ENCODE measurements at regions of chr5 and their contacts with region 1.

Region 1: DNA sequence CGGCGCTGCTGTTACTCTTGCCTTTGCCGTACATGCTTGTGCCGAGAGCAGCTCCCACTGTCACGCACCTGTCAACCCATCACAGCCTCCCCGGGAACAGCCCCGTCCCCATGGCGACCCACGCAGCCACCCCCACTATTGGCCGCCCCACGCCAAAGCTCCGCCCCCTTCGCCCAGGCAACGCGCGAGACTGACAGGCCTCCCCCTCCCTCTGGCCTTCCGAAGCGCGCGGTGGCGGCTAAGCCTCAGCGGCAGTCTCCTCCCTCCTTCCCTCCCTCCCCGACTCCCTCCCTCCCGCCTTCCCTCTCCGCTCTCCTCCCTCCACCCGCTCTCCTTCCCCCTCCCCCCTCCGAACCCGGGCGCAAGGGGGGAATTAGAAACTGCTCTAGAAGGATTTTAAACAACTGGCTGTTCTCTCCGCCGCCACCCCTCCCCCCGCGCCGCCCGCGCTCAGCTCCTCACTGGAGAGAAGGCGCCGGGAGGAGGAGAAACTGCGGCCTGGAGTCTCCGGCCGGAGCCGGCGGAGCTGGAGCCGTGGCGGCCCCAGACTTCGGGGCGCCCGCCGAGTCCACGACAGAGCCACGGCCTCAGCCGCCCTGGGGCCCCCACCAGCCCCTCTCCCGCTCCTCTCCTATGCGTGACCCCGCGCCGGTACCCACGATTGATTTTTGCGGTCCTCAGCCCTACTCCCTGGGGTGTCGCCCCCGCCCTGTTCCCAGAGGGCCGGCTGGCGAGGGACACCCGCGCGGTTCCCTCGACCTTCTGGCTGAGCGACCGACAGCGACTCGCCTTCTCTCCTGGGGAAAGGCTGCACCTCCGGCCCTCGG is at the start of gene SSBP2:
- DNase-seq: peak; percentile 99 to 100 (median 100)
- ATAC-seq: peak; percentile 87
- H3K4me3 ChIP-seq: peak within 1 kb of the TSS; percentile 68
- H3K4me3 Mint-ChIP-seq: peak within 1 kb of the TSS; percentile 99
- H3K27ac ChIP-seq: peak within 1 kb of the TSS; percentile 66 to 79
- H3K27ac Mint-ChIP-seq: peak within 1 kb of the TSS; percentile 96
- H3K4me1 ChIP-seq: peaks cover 13% of the 10 kb centered on the region
- H3K4me1 Mint-ChIP-seq: peaks cover 44% of the 10 kb centered on the region
- H3K27me3 ChIP-seq: no peaks in the 10 kb centered on the region
- H3K27me3 Mint-ChIP-seq: no peaks in the 10 kb centered on the region
- CTCF ChIP-seq: no peak
- total RNA-seq, gene SSBP2: 33.5 to 36.3 TPM

Region 2: GRCh38 chr5:80654391-80655230 is 1096.6 kb before region 1 on chr5 and contains the starts of genes DHFR and MSH3:
- CTCF ChIA-PET with region 1: no interaction called
- POLR2A ChIA-PET with region 1: interaction called, 3 read pairs
- intact Hi-C with region 1: loop called in 1 of 2 experiments (anchors 5 kb)
- DNase-seq: peak; percentile 81 to 96 (median 86)
- ATAC-seq: peak; percentile 74
- H3K4me3 ChIP-seq: peak within 1 kb of the TSS; percentile 65
- H3K4me3 Mint-ChIP-seq: peak within 1 kb of the TSS; percentile 92
- H3K27ac ChIP-seq: peak within 1 kb of the TSS; percentile 60 to 78
- H3K27ac Mint-ChIP-seq: peak within 1 kb of the TSS; percentile 95
- H3K4me1 ChIP-seq: peaks cover 20% of the 10 kb centered on the region
- H3K4me1 Mint-ChIP-seq: peaks cover 35% of the 10 kb centered on the region
- H3K27me3 ChIP-seq: no peaks in the 10 kb centered on the region
- H3K27me3 Mint-ChIP-seq: no peaks in the 10 kb centered on the region
- CTCF ChIP-seq: no peak
- total RNA-seq, gene DHFR: 3.6 to 4.0 TPM
- total RNA-seq, gene MSH3: 11.3 to 13.0 TPM

Region 3: GRCh38 chr5:81506900-81507588 is 244.2 kb before region 1 on chr5:
- CTCF ChIA-PET with region 1: no interaction called
- POLR2A ChIA-PET with region 1: interaction called, 8 read pairs
- intact Hi-C with region 1: loop called in 1 of 2 experiments (anchors 5 kb)
- DNase-seq: peak in 10 of 14 experiments; percentile 1 to 75 (median 20)
- ATAC-seq: peak; percentile 89
- H3K4me3 ChIP-seq: no peak overlapping the region
- H3K4me3 Mint-ChIP-seq: no peak overlapping the region
- H3K27ac ChIP-seq: no peak overlapping the region
- H3K27ac Mint-ChIP-seq: no peak overlapping the region
- H3K4me1 ChIP-seq: no peaks in the 10 kb centered on the region
- H3K4me1 Mint-ChIP-seq: peaks cover 7% of the 10 kb centered on the region
- H3K27me3 ChIP-seq: no peaks in the 10 kb centered on the region
- H3K27me3 Mint-ChIP-seq: no peaks in the 10 kb centered on the region
- CTCF ChIP-seq: peak; percentile 71

Region 4: GRCh38 chr5:81675846-81676245 is 75.4 kb before region 1 on chr5:
- CTCF ChIA-PET with region 1: no interaction called
- POLR2A ChIA-PET with region 1: interaction called, 3 read pairs
- intact Hi-C with region 1: loop called in 1 of 2 experiments (anchors 5 kb)
- DNase-seq: no peak
- ATAC-seq: no peak
- H3K4me3 ChIP-seq: no peak overlapping the region
- H3K4me3 Mint-ChIP-seq: no peak overlapping the region
- H3K27ac ChIP-seq: no peak overlapping the region
- H3K27ac Mint-ChIP-seq: no peak overlapping the region
- H3K4me1 ChIP-seq: no peaks in the 10 kb centered on the region
- H3K4me1 Mint-ChIP-seq: peaks cover 37% of the 10 kb centered on the region
- H3K27me3 ChIP-seq: no peaks in the 10 kb centered on the region
- H3K27me3 Mint-ChIP-seq: no peaks in the 10 kb centered on the region
- CTCF ChIP-seq: no peak

Region 5: GRCh38 chr5:81767097-81767496 is 15.9 kb after region 1 on chr5:
- CTCF ChIA-PET with region 1: no interaction called
- POLR2A ChIA-PET with region 1: interaction called, 11 read pairs
- intact Hi-C with region 1: no loop called
- DNase-seq: no peak
- ATAC-seq: no peak
- H3K4me3 ChIP-seq: no peak overlapping the region
- H3K4me3 Mint-ChIP-seq: no peak overlapping the region
- H3K27ac ChIP-seq: no peak overlapping the region
- H3K27ac Mint-ChIP-seq: no peak overlapping the region
- H3K4me1 ChIP-seq: no peaks in the 10 kb centered on the region
- H3K4me1 Mint-ChIP-seq: no peaks in the 10 kb centered on the region
- H3K27me3 ChIP-seq: no peaks in the 10 kb centered on the region
- H3K27me3 Mint-ChIP-seq: no peaks in the 10 kb centered on the region
- CTCF ChIP-seq: no peak

Region 6: DNA sequence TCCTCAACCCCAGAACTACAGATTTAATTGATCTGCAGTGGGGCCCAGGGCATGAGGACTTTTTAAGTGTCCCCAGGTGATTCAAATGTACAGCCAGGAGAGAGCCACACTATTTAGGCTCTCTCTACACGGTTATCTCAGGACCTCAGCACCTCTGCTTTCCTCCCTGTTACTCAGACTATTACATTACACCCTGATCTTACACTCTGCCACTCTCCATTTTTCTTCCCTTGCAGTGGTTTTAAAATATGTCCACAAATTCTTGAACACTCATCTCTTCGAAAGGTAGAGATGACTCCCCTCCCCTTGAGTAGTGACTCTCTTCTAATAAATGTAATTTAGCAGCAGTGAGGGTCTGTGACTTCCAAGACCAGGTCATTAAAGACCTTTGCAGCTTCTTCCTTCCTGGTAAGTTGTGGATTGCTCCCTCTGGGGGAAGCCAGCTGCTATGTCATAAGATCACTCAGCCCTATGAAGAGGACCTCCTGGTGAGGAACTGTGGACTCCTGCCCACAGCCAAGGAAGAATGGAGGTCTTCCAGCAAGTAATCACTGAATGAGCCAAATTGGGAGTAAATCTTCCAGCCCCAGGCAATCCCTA is 87.2 kb after region 1 on chr5:
- CTCF ChIA-PET with region 1: interaction called, 6 read pairs
- POLR2A ChIA-PET with region 1: interaction called, 41 read pairs
- intact Hi-C with region 1: no loop called
- DNase-seq: peak in 8 of 14 experiments; percentile 15 to 71 (median 40)
- ATAC-seq: peak; percentile 94
- H3K4me3 ChIP-seq: no peak overlapping the region
- H3K4me3 Mint-ChIP-seq: no peak overlapping the region
- H3K27ac ChIP-seq: no peak overlapping the region
- H3K27ac Mint-ChIP-seq: no peak overlapping the region
- H3K4me1 ChIP-seq: peaks cover 8% of the 10 kb centered on the region
- H3K4me1 Mint-ChIP-seq: peaks cover 9% of the 10 kb centered on the region
- H3K27me3 ChIP-seq: no peaks in the 10 kb centered on the region
- H3K27me3 Mint-ChIP-seq: no peaks in the 10 kb centered on the region
- CTCF ChIP-seq: peak; percentile 76

Region 7: DNA sequence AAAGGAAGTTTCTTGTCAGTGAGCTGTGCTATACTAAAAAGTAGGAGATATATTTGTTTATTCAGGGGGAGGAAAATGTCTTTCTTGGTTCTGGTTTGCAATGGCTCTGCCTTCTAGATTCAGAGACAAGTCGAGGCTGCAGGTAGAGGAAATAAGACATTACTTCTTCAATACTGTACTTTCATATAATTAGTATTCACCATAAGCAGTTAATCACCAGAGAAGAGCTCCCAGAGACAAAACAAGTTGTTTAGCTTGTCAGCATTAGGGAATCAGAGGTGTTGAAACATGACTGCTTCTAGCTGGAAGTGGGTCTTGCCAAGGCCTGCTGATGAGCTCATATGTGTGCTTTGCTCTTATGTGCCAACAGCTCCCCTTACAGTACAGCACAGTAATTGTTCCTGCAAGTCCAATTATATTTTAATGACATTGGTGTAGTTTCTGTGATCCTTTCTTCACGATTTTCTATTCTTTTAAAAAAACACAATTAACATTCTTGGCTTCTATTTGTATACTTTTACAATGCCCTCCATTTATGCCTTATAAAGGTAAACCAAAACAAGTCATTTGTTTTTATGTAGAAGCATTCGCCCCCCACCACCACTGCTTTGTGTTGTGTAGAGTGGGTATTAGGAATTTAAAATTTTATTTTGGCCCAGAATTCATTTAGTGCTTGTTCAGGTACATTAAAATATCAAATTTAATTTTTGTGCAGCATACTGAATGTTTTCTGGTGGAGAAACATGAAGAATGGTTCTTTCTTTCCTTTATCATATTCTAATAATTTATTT is 414.7 kb after region 1 on chr5:
- CTCF ChIA-PET with region 1: no interaction called
- POLR2A ChIA-PET with region 1: interaction called, 14 read pairs
- intact Hi-C with region 1: loop called in 1 of 2 experiments (anchors 10 kb)
- DNase-seq: peak in 11 of 14 experiments; percentile 2 to 78 (median 29)
- ATAC-seq: peak; percentile 100
- H3K4me3 ChIP-seq: no peak overlapping the region
- H3K4me3 Mint-ChIP-seq: no peak overlapping the region
- H3K27ac ChIP-seq: no peak overlapping the region
- H3K27ac Mint-ChIP-seq: peak overlapping the region; percentile 43
- H3K4me1 ChIP-seq: no peaks in the 10 kb centered on the region
- H3K4me1 Mint-ChIP-seq: peaks cover 12% of the 10 kb centered on the region
- H3K27me3 ChIP-seq: no peaks in the 10 kb centered on the region
- H3K27me3 Mint-ChIP-seq: no peaks in the 10 kb centered on the region
- CTCF ChIP-seq: peak; percentile 79

Region 8: GRCh38 chr5:82426464-82427154 is 675.4 kb after region 1 on chr5:
- CTCF ChIA-PET with region 1: no interaction called
- POLR2A ChIA-PET with region 1: no interaction called
- intact Hi-C with region 1: no loop called
- DNase-seq: no peak
- ATAC-seq: no peak
- H3K4me3 ChIP-seq: no peak overlapping the region
- H3K4me3 Mint-ChIP-seq: no peak overlapping the region
- H3K27ac ChIP-seq: no peak overlapping the region
- H3K27ac Mint-ChIP-seq: no peak overlapping the region
- H3K4me1 ChIP-seq: no peaks in the 10 kb centered on the region
- H3K4me1 Mint-ChIP-seq: no peaks in the 10 kb centered on the region
- H3K27me3 ChIP-seq: no peaks in the 10 kb centered on the region
- H3K27me3 Mint-ChIP-seq: no peaks in the 10 kb centered on the region
- CTCF ChIP-seq: no peak